Mucosa of descending colon (tissue), 3 donors: ENCODE measurements at regions of chrX and their contacts with region 1.

Region 1: GRCh38 chrX:152632445-152633097 is 5.1 kb upstream of the GABRQ start:
- DNase-seq: peak in 2 of 3 donors; percentile 28 to 70
- ATAC-seq: peak; percentile 64
- H3K4me3 ChIP-seq: no peak overlapping the region
- H3K4me1 ChIP-seq: no peaks in the 10 kb centered on the region
- CTCF ChIP-seq: no peak

Region 2: DNA sequence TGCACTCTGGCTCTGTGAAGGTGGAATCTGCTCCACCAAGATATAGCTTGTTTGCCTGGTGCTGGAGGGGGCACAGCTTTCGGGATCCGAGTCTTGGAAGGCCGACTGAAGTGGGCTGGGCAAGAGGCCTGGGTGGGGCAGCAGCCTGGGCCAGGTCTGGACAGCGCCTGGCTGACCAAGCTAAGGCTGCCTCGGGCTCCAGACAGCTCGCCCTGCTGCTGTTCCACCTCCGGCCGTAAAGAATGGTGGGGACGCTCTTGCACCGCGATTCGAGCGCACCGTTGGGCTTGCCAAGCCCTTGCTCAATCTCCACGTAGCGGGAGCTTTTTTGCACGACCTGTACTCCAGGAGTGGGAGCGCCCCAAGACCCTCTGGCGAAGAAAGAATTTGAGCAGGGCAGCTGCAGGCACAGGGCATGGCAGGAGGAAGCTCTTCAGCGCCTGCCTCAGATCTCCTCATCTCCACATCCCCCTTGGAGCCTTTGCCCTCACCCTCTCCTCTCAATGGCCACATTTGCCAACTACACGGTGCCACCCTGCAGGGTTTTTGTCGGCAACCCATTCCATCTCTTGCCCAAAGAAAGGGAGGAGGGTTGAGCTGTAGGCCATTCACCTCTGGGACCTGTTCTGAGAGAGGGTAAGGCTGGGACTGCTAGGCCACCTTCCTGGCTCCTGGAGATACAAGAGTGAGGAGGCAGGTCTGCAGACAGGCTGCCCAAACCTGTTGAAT is 879.1 kb before region 1 on chrX:
- intact Hi-C with region 1: loop called (anchors 5 to 10 kb)
- DNase-seq: peak in 2 of 3 donors; percentile 37 to 52
- ATAC-seq: peak; percentile 80
- H3K4me3 ChIP-seq: no peak overlapping the region
- H3K4me1 ChIP-seq: no peaks in the 10 kb centered on the region
- CTCF ChIP-seq: peak; percentile 49

Region 3: DNA sequence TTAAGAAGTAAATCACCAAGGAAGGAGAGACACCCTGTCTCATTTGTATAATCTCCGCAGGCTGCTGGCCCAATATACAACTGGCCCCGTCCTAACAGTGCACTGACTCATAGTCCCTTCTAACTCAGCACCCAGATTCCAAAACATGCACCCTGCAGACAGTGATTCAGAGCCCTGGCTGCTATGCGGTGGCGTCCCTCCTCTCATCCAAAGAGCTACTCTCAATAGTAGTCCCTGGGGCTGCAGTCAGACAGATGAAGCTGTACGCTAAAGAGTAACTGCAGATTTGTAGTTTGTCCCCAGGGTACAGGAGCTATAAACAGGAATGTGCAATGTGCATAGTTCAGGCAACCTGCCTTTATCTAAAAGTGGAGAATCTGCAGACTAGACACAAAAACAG is 204.4 kb before region 1 on chrX:
- intact Hi-C with region 1: no loop called
- DNase-seq: no peak
- ATAC-seq: no peak
- H3K4me3 ChIP-seq: no peak overlapping the region
- H3K4me1 ChIP-seq: no peaks in the 10 kb centered on the region
- CTCF ChIP-seq: no peak